ENCODE measurements at regions of chr16 and their contacts with region 1.

Region 1: GRCh38 chr16:3059000-3059722 is 6.3 kb upstream of the IL32 start:
- DNase-seq: peak; percentile 67 to 82
- ATAC-seq: peak; percentile 83 to 89
- H3K4me3 ChIP-seq: peak overlapping the region; percentile 79 to 98 (median 92)
- H3K27ac ChIP-seq: peak overlapping the region; percentile 79 to 85 (median 83)
- H3K4me1 ChIP-seq: peaks cover 28 to 39% of the 10 kb centered on the region in 2 donors
- H3K27me3 ChIP-seq: no peaks in the 10 kb centered on the region
- CTCF ChIP-seq: peak; percentile 81 to 99 (median 99)
- POLR2A ChIP-seq: peak in 1 of 2 donors; percentile 17

Region 2: GRCh38 chr16:2267913-2268666 is 791.1 kb before region 1 on chr16 and contains the start of gene RNPS1:
- in situ Hi-C with region 1: no loop called
- intact Hi-C with region 1: no loop called
- DNase-seq: peak; percentile 87 to 93
- ATAC-seq: peak; percentile 91 to 93
- H3K4me3 ChIP-seq: peak within 1 kb of the TSS; percentile 68 to 94 (median 86)
- H3K27ac ChIP-seq: peak within 1 kb of the TSS; percentile 93 to 99 (median 96)
- H3K4me1 ChIP-seq: peaks cover 27 to 34% of the 10 kb centered on the region in 2 donors
- H3K27me3 ChIP-seq: no peaks in the 10 kb centered on the region
- CTCF ChIP-seq: peak in 2 of 5 experiments; percentile 35 to 63
- POLR2A ChIP-seq: peak; percentile 97 to 98
- total RNA-seq, gene RNPS1: 158 to 222 (median 172) TPM

Region 3: DNA sequence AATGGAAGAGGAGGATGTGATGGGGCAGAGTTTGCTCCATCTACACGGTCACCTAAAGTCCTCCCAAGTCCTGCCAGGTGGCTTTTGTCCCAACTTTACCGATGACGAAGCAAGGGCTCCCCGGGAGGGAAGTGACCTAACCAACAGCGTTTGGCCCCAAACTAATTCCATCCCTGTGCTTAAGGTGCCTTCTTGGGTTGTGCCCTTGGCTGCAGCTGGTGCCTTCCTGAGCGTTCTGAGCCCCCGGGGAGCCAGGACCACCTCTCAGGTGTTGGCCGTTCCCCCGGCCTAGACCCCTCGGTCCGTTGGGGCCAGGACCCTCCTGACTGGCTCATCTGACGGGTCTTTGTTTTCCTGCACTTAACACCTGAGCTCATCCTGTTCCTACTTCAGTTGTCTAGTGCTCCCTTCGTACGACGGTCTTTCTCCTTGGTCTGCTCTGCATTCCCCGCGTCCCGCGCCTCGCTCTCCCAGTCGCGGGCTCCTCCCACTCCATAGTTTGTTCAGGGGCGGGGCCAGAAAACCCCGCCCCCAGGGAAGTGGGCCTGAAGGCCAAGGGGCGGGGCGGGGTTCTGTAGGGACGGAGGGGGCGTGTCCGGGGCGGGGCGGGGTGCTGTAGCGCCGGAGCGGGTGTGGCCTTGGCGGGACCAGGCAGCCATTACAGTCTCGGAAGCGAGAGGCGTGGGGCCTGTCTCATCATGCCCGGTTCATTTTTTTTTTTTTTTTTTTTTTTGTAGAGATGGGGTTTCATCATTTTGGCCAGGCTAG is 40.8 kb after region 1 on chr16:
- in situ Hi-C with region 1: no loop called
- intact Hi-C with region 1: no loop called
- DNase-seq: peak; percentile 78 to 86
- ATAC-seq: peak; percentile 79 to 83
- H3K4me3 ChIP-seq: peak overlapping the region in 3 of 4 donors; percentile 27 to 54 (median 39)
- H3K27ac ChIP-seq: peak overlapping the region in 3 of 4 donors; percentile 7 to 58 (median 9)
- H3K4me1 ChIP-seq: peaks cover 11% of the 10 kb centered on the region in 2 donors
- H3K27me3 ChIP-seq: no peaks in the 10 kb centered on the region
- CTCF ChIP-seq: no peak
- POLR2A ChIP-seq: no peak

Region 4: DNA sequence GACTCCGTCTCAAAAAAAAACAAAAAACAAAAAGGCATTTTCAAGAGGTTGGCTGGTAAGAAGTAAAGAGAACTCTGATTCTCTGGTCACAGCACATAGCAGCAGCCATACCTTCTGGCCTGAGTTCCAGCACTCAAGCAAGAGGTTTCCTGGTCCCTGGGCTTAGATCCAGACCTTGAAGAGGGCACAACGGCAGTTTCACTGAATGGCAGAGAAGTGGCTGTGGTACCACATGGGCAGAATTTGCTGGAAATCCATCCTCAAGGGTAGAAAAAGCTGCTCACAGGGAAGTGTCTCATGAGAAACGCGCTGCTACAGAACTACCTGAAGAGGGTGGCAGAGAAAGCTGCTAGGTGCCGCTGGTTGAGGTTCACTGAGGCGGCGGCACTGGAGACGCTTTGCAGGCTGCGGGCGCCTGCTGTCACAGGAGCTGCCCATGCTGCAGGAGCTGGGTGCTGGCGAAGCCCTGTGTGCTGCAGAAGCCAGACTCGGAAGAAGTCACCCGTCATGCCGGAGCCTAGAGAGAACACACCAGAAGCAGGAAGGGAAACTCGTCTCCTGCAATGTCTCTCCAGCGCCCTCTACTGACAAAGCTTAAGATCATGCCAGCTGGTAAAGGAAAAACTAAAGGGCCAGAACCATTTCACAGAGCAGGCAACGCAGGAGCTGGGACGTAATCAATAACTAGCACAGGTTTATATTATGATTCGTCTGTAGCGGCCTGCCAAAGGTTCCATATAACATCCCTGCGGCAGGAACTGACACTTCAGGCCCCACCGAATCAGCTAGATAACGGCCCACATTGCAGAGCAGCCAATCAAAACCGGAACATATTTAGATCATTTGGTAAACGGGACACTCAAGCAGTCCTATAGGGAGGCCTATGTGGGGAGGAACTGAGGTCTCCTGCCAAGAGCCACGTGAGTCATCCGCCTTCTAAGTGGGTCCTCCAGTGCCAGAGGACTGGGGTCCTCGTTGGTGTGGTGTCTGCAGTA is 70.3 kb after region 1 on chr16:
- in situ Hi-C with region 1: loop called in 3 of 4 experiments (anchors 5 to 10 kb)
- intact Hi-C with region 1: loop called (anchors 1 kb)
- DNase-seq: peak; percentile 60 to 79
- ATAC-seq: peak; percentile 87 to 89
- H3K4me3 ChIP-seq: peak overlapping the region; percentile 44 to 53 (median 47)
- H3K27ac ChIP-seq: peak overlapping the region; percentile 54 to 74 (median 69)
- H3K4me1 ChIP-seq: peaks cover 32 to 46% of the 10 kb centered on the region in 2 donors
- H3K27me3 ChIP-seq: no peaks in the 10 kb centered on the region
- CTCF ChIP-seq: peak; percentile 85 to 96 (median 88)
- POLR2A ChIP-seq: no peak